H1 (cell line): ENCODE measurements at regions of chr20 and their contacts with region 1.

Region 1: GRCh38 chr20:12682613-12683012 is 326.2 kb upstream of the SPTLC3 start:
- DNase-seq: no peak
- H3K4me3 ChIP-seq: no peak overlapping the region
- H3K27ac ChIP-seq: no peak overlapping the region
- H3K4me1 ChIP-seq: peaks cover 0 to 10% (median 2%) of the 10 kb centered on the region in 4 experiments; a peak in 3 of 7 replicates
- H3K27me3 ChIP-seq: no peaks in the 10 kb centered on the region
- CTCF ChIP-seq: no peak
- EP300 ChIP-seq: no peak
- POLR2A ChIP-seq: no peak
- RAD21 ChIP-seq: no peak

Region 2: DNA sequence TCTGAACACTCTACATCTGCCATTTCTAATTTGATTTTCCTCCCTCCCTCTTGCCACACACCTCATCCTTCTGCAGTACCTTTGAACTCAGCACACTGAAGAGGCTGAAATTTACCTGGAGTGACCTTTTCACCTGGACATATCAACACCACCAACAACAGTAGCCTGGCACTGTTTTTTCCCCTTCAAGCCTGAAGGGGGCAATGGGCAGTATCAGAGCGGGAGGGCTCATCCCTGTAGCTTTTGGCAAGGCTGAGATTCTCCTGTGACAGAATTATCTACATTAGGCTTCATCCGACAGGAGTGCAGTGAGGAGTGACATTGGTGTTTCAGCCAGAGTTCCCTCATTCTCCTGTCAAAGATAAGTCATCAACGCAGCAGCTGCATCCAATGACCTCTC is 13.3 kb after region 1 on chr20:
- CTCF ChIA-PET with region 1: interaction called, 13 read pairs
- POLR2A ChIA-PET with region 1: interaction called, 3 read pairs
- DNase-seq: no peak
- H3K4me3 ChIP-seq: no peak overlapping the region
- H3K27ac ChIP-seq: no peak overlapping the region
- H3K4me1 ChIP-seq: peaks cover 0 to 3% (median under 1%) of the 10 kb centered on the region in 4 experiments; a peak in 2 of 7 replicates
- H3K27me3 ChIP-seq: no peaks in the 10 kb centered on the region
- CTCF ChIP-seq: peak; percentile 24 to 56 (median 31); a peak in 3 of 4 replicates
- EP300 ChIP-seq: no peak
- POLR2A ChIP-seq: no peak
- RAD21 ChIP-seq: peak; percentile 26 to 48; a peak in 3 of 4 replicates